ENCODE measurements at regions of chr6 and their contacts with region 1.

Region 1: DNA sequence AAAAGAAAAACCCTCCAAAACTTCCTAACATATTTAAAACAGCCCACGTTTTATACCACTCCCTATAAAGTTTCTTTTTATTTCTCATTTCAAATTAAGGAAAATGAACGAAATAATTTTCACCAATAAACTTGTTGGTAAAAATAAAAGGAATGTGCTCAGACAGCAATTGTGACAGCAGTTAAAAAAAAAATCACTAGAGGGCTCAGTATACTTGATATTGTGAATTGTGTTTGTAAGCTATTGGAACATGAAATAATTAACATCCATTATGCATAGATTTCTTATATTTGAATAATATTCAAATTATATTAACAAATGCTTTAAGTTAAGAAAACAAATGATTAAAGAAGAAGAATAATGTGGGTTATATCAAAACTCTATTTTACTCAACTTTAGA is 105.5 kb downstream of the ASCC3 start:
- DNase-seq: no peak
- ATAC-seq: no peak
- H3K4me3 ChIP-seq: no peak overlapping the region
- H3K27ac ChIP-seq: no peak overlapping the region
- H3K4me1 ChIP-seq: no peaks in the 10 kb centered on the region
- H3K27me3 ChIP-seq: no peaks in the 10 kb centered on the region
- CTCF ChIP-seq: no peak
- EP300 ChIP-seq: no peak
- POLR2A ChIP-seq: no peak
- RAD21 ChIP-seq: no peak

Region 2: DNA sequence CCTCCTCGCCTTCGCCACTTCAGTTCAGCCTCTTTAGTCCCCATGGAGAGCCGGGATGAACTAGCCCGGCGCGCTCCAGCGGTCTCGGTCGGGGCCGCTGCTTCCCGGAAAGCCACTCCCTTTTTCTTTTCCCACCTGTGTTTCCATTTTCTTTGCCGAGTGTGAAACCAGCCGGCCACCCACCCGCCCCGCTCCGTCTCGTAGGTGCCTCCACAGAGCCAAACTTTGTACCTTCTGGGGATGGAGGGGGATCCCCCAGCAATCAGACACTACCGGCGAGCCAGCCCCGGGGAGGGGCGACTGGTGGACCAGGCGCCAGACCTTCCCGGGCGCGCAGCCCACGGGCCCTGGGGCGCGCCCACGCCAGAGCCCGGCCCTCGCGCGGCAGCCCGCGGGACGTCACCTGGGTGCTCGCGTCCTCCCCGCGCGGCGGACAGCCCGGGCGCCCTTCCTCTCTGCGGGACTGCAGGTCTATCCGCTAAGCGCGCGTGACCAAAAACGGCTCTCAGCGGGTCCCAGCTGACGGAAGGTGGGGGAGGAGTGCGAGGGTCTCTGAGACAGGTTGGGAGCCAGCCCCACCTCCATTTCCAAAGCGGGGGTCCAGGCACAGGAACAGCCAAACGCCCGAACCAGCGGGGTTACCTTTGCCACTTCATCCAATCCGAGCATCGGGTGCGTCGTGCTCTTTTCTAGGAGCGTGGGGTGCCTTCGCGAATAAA is 782.0 kb before region 1 on chr6 and contains the start of gene MCHR2:
- CTCF ChIA-PET with region 1: no interaction called
- POLR2A ChIA-PET with region 1: no interaction called
- in situ Hi-C with region 1: no loop called
- intact Hi-C with region 1: no loop called
- DNase-seq: no peak
- ATAC-seq: no peak; the same call in 2 of the 3 replicates
- H3K4me3 ChIP-seq: no peak within 1 kb of the TSS
- H3K27ac ChIP-seq: no peak within 1 kb of the TSS
- H3K4me1 ChIP-seq: no peaks in the 10 kb centered on the region
- H3K27me3 ChIP-seq: peaks cover 0 to 21% of the 10 kb centered on the region in 2 experiments; a peak in 2 of 5 replicates
- CTCF ChIP-seq: no peak
- EP300 ChIP-seq: no peak
- POLR2A ChIP-seq: no peak
- RAD21 ChIP-seq: no peak
- total RNA-seq, gene MCHR2: not detected in 2 replicates

Region 3: DNA sequence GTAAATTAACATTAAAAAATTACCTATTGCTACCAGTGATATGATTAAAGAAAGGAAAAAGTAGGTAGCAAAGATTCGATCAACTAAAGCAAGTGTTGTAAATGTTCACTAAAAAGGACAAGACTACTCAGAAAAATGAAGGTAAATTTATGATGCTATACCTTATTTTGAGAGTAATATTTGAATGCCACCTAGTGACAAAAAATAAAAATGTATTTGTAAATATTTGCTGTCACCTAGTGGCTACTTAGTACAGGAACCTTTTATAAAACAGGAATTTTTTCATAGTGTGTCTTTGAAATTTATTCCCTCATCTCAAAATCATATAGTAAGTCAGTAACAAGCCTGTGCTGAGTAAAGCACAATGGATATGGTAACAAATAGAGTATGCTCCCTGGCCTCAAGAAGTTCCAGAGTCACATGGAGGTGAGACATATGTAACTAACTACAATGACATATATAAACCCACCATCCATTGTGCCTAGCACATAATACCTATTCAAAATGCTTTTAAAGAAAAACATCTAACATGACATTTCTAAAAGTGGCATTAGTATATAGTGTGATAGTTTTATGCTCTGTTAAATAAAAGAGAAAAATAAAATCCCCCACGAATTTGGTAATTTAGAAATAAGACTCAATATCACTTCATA is 117.9 kb before region 1 on chr6:
- CTCF ChIA-PET with region 1: no interaction called
- POLR2A ChIA-PET with region 1: no interaction called
- in situ Hi-C with region 1: no loop called
- intact Hi-C with region 1: no loop called
- DNase-seq: no peak
- ATAC-seq: 0 out of 3 replicates have a peak, but pooled peaks have one; percentile 41
- H3K4me3 ChIP-seq: no peak overlapping the region
- H3K27ac ChIP-seq: no peak overlapping the region
- H3K4me1 ChIP-seq: no peaks in the 10 kb centered on the region
- H3K27me3 ChIP-seq: no peaks in the 10 kb centered on the region
- CTCF ChIP-seq: peak; percentile 31; the same call in 1 of the 2 replicates
- EP300 ChIP-seq: no peak
- POLR2A ChIP-seq: no peak
- RAD21 ChIP-seq: no peak

Region 4: GRCh38 chr6:101226626-101227165 is 451.0 kb after region 1 on chr6:
- CTCF ChIA-PET with region 1: no interaction called
- POLR2A ChIA-PET with region 1: no interaction called
- in situ Hi-C with region 1: no loop called
- intact Hi-C with region 1: loop called (anchors 2 kb)
- DNase-seq: peak; percentile 20
- ATAC-seq: peak; percentile 75
- H3K4me3 ChIP-seq: no peak overlapping the region
- H3K27ac ChIP-seq: no peak overlapping the region
- H3K4me1 ChIP-seq: no peaks in the 10 kb centered on the region
- H3K27me3 ChIP-seq: no peaks in the 10 kb centered on the region
- CTCF ChIP-seq: peak; percentile 54
- EP300 ChIP-seq: no peak
- POLR2A ChIP-seq: no peak
- RAD21 ChIP-seq: 0 out of 2 replicates have a peak, but pooled peaks have one; percentile 28

Measured in HepG2 (cell line).